Activated T-helper 1 cell treated with anti-CD3 and anti-CD28 coated beads, Interleukin-12 subunit alpha, Interleukin-12 subunit beta, Interleukin-2, Interleukin-4 antibody, amounts not matched to agents 30 ng/mL and 10 ng/mL and 1 ng/mL, durations not matched to agents 14 hours and 24 hours and 36 hours (primary cell): ENCODE measurements at regions of chr15 and their contacts with region 1.

Region 1: GRCh38 chr15:74127260-74127953 is 3.0 kb upstream of the ISLR2 start:
- DNase-seq: peak; percentile 78
- H3K4me3 Mint-ChIP-seq: no peak overlapping the region
- H3K27ac Mint-ChIP-seq: no peak overlapping the region
- H3K4me1 Mint-ChIP-seq: peaks cover 22% of the 10 kb centered on the region
- H3K27me3 Mint-ChIP-seq: peaks cover 74% of the 10 kb centered on the region

Region 2: DNA sequence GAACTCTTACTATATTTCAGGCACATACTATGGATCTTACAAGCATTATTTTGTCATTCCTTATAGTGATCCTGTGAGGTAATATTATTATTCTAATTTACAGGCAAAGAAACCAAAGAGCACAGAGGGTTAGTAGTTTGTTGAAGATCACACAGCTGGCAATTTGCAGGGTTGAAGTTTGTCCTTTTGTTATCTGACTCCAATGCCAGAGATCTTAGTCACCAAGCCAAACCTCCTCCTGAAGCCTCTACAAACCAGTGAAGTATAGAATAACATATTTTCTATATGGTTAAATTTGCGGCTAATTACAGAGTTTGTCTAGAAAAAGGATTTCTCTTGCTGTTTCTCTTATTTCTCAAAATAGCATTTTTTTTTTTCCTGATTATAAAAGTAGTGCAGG is 14.2 kb after region 1 on chr15:
- intact Hi-C with region 1: loop called (anchors 2 kb)
- DNase-seq: no peak
- H3K4me3 Mint-ChIP-seq: no peak overlapping the region
- H3K27ac Mint-ChIP-seq: no peak overlapping the region
- H3K4me1 Mint-ChIP-seq: peaks cover 9% of the 10 kb centered on the region
- H3K27me3 Mint-ChIP-seq: peaks cover 44% of the 10 kb centered on the region

Region 3: GRCh38 chr15:74302821-74303359 is 175.5 kb after region 1 on chr15:
- intact Hi-C with region 1: loop called (anchors 1 kb)
- DNase-seq: no peak
- H3K4me3 Mint-ChIP-seq: no peak overlapping the region
- H3K27ac Mint-ChIP-seq: no peak overlapping the region
- H3K4me1 Mint-ChIP-seq: no peaks in the 10 kb centered on the region
- H3K27me3 Mint-ChIP-seq: peaks cover 22% of the 10 kb centered on the region

Region 4: DNA sequence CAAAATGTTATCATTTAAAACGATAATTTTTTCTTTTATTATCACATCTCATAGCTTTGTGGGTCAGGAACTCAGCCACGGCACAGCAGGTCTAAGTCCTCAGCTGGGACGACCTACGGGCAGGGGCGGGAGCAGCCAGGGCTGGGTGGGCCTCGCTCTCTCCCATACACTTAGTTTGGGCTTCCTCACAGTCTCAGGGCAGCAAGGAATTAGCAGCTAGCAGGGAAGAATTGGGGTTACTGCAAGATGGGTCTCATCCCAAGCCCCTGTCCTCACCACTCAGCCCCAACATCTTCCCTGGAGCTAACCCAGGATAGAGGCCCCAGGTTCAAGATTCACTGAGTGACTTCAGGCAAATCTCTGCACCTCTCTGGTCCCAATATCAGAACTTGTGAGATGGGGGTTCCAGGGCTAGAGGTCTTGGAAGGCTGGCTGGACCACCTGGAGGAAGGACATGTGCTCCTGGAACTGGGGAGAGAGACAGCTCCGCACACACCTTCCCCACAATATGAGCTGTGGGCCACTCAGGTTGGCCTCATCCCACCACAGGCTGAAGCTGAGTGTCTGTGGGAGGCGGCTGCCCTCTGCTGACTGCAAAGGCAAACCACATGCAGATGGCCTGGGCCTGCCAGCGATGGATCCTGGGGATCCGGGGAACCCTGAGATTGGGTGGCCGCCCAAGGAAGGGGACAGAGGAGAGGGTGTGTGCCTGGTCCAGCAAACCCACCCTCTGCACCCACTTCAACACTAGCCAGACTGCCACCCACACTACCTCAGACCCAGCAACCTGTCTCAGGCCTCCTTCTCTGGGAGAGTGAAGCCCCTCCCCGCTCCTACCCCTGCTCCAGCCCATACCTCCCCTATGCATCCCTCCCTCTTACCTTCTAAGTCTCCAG is 195.0 kb after region 1 on chr15:
- intact Hi-C with region 1: loop called (anchors 1 kb)
- DNase-seq: peak; percentile 31
- H3K4me3 Mint-ChIP-seq: no peak overlapping the region
- H3K27ac Mint-ChIP-seq: no peak overlapping the region
- H3K4me1 Mint-ChIP-seq: no peaks in the 10 kb centered on the region
- H3K27me3 Mint-ChIP-seq: peaks cover 2% of the 10 kb centered on the region